GM12878 (cell line): ENCODE measurements at regions of chr2 and their contacts with region 1.

Region 1: DNA sequence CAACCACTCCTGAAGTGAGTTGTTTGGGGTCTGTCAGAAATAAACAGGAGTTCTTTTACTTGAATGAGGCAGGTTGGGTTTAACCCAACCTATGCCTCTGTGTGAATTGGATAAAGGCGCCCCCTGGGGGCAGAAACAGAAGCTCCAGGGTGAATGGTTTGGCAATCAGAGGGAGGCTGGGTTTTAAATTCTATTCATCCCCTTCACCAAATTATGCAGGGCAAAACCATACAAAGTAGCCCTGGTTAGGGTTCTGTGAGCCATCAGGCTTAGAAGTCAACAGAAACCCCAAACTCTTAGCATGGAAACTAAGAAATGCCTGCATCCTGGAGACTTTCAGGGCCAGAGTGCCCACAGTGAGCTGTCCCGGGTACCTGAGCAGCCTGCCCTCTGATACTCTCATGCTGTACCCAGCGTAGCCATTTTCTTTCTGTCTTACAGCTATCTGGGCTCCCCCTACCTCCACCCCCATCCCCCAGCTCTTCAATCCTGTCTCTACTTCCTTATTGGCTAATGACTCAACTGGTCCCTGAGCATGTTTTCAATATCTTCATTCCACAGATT is 241.5 kb downstream of the ICOS start:
- DNase-seq: peak; percentile 1
- ATAC-seq: peak; percentile 90
- H3K4me3 ChIP-seq: no peak overlapping the region
- H3K27ac ChIP-seq: no peak overlapping the region
- H3K4me1 ChIP-seq: no peaks in the 10 kb centered on the region
- H3K27me3 ChIP-seq: no peaks in the 10 kb centered on the region
- CTCF ChIP-seq: peak; percentile 54 to 73 (median 62)
- EP300 ChIP-seq: no peak
- POLR2A ChIP-seq: no peak
- RAD21 ChIP-seq: peak; percentile 54

Region 2: GRCh38 chr2:203484266-203485112 is 693.6 kb before region 1 on chr2:
- CTCF ChIA-PET with region 1: interaction called, 3 read pairs
- POLR2A ChIA-PET with region 1: no interaction called
- RAD21 ChIA-PET with region 1: no interaction called
- SMC1A ChIA-PET with region 1: no interaction called
- in situ Hi-C with region 1: no loop called
- intact Hi-C with region 1: loop called (anchors 10 kb)
- DNase-seq: peak; percentile 40
- ATAC-seq: peak; percentile 93
- H3K4me3 ChIP-seq: no peak overlapping the region
- H3K27ac ChIP-seq: no peak overlapping the region
- H3K4me1 ChIP-seq: no peaks in the 10 kb centered on the region
- H3K27me3 ChIP-seq: no peaks in the 10 kb centered on the region; a peak in 1 of 4 replicates
- CTCF ChIP-seq: peak; percentile 73 to 78 (median 77)
- EP300 ChIP-seq: no peak
- POLR2A ChIP-seq: no peak
- RAD21 ChIP-seq: peak; percentile 95

Region 3: GRCh38 chr2:204024503-204024902 is 153.6 kb before region 1 on chr2:
- CTCF ChIA-PET with region 1: interaction called, 6 read pairs
- POLR2A ChIA-PET with region 1: no interaction called
- RAD21 ChIA-PET with region 1: no interaction called
- SMC1A ChIA-PET with region 1: no interaction called
- in situ Hi-C with region 1: no loop called
- intact Hi-C with region 1: loop called (anchors 2 kb)
- DNase-seq: no peak
- ATAC-seq: peak; percentile 15; the same call in 1 of the 3 replicates
- H3K4me3 ChIP-seq: no peak overlapping the region
- H3K27ac ChIP-seq: no peak overlapping the region
- H3K4me1 ChIP-seq: no peaks in the 10 kb centered on the region
- H3K27me3 ChIP-seq: no peaks in the 10 kb centered on the region
- CTCF ChIP-seq: peak; percentile 30 to 40 (median 32); a peak in 4 of 6 replicates
- EP300 ChIP-seq: no peak
- POLR2A ChIP-seq: no peak
- RAD21 ChIP-seq: peak; percentile 68

Region 4: DNA sequence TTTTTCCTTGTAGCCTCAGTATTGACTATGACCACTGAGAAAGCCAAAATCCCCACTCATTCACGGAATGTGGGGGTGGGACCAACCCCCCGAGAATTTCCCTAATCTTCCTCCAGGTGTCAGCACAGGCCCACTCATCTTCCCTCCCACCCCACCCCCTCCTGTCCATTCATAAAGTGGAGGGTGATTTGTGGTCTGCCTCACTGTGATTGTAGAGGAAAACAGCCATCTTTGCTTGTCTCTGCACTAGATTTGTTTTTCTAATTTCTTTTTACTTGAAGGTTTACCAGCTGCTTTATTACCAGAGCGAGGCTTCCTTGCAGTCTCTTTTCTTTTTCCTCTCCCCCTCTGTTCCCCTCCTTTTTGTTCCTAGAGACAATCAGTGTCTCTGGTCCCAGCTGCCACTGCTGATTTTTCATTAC is 69.7 kb before region 1 on chr2:
- CTCF ChIA-PET with region 1: interaction called, 11 read pairs
- POLR2A ChIA-PET with region 1: no interaction called
- RAD21 ChIA-PET with region 1: interaction called, 3 read pairs
- SMC1A ChIA-PET with region 1: interaction called, 6 read pairs
- in situ Hi-C with region 1: no loop called
- intact Hi-C with region 1: loop called (anchors 1 kb)
- DNase-seq: no peak
- ATAC-seq: peak; percentile 72
- H3K4me3 ChIP-seq: no peak overlapping the region
- H3K27ac ChIP-seq: no peak overlapping the region
- H3K4me1 ChIP-seq: peaks cover 19% of the 10 kb centered on the region
- H3K27me3 ChIP-seq: peaks cover 1 to 12% of the 10 kb centered on the region in 2 experiments; a peak in 2 of 4 replicates
- CTCF ChIP-seq: peak; percentile 29 to 46 (median 45); a peak in 5 of 6 replicates
- EP300 ChIP-seq: no peak
- POLR2A ChIP-seq: no peak
- RAD21 ChIP-seq: peak; percentile 56

Region 5: DNA sequence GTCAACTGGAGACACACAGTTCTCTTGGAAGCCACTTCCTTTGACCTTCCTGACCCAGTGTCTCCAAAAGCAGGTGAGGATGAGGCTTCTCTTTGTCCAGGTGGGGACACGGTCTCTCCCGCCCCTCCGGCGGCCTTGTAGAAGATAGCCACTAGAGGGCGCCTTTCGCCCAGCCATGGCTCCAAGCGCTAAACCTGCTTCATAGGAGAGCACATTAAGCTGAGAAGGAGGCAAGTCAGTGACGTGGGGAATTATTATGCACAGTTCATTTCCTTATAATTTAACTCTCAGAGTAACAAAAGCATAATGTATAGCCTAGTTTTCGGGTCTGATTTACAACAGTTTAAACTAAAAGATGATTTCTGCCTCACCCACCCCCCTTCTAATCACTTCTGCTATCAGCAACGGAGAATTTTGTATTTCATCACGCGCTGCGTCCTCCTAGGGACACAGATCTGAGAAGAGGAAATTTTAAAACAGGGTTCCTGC is 32.8 kb before region 1 on chr2:
- CTCF ChIA-PET with region 1: interaction called, 22 read pairs
- POLR2A ChIA-PET with region 1: no interaction called
- RAD21 ChIA-PET with region 1: interaction called, 3 read pairs
- SMC1A ChIA-PET with region 1: interaction called, 4 read pairs
- in situ Hi-C with region 1: no loop called
- intact Hi-C with region 1: loop called (anchors 1 kb)
- DNase-seq: no peak
- ATAC-seq: peak; percentile 100
- H3K4me3 ChIP-seq: no peak overlapping the region
- H3K27ac ChIP-seq: no peak overlapping the region
- H3K4me1 ChIP-seq: no peaks in the 10 kb centered on the region
- H3K27me3 ChIP-seq: peaks cover 0 to 4% of the 10 kb centered on the region in 2 experiments; a peak in 3 of 4 replicates
- CTCF ChIP-seq: peak; percentile 83 to 95 (median 90)
- EP300 ChIP-seq: no peak
- POLR2A ChIP-seq: no peak
- RAD21 ChIP-seq: peak; percentile 83

Region 6: GRCh38 chr2:204191574-204192335 is 13.7 kb after region 1 on chr2:
- CTCF ChIA-PET with region 1: interaction called, 10 read pairs
- POLR2A ChIA-PET with region 1: no interaction called
- RAD21 ChIA-PET with region 1: no interaction called
- SMC1A ChIA-PET with region 1: interaction called, 5 read pairs
- in situ Hi-C with region 1: no loop called
- intact Hi-C with region 1: no loop called
- DNase-seq: no peak
- ATAC-seq: no peak
- H3K4me3 ChIP-seq: no peak overlapping the region
- H3K27ac ChIP-seq: no peak overlapping the region
- H3K4me1 ChIP-seq: no peaks in the 10 kb centered on the region
- H3K27me3 ChIP-seq: no peaks in the 10 kb centered on the region
- CTCF ChIP-seq: no peak
- EP300 ChIP-seq: no peak
- POLR2A ChIP-seq: no peak
- RAD21 ChIP-seq: no peak